PC-9 (cell line): ENCODE measurements at regions of chr5 and their contacts with region 1.

Region 1: DNA sequence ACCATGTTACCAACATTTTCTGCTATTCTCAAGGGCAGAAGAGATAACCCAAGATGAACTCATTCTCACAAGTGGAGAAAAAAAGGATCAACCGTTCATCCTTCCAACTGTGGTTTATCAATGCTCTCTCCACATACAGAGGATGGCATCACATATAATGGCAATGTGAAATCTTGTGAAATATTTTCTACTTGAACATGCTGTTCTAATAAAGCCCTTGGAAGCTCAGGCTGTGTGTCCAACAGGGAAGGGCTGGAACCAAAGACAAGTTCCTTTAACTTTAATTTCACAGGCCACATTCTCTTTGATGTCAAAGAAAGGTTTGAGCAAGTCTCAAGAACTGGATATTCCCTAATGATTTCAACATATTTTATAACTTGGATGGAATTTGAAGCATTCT is 230.5 kb downstream of the SPOCK1 start:
- DNase-seq: no peak
- H3K4me3 ChIP-seq: no peak overlapping the region
- H3K27ac ChIP-seq: no peak overlapping the region
- H3K4me1 ChIP-seq: no peaks in the 10 kb centered on the region
- H3K27me3 ChIP-seq: no peaks in the 10 kb centered on the region
- CTCF ChIP-seq: no peak

Region 2: GRCh38 chr5:136754216-136754615 is 514.4 kb before region 1 on chr5:
- CTCF ChIA-PET with region 1: no interaction called
- POLR2A ChIA-PET with region 1: no interaction called
- intact Hi-C with region 1: no loop called
- DNase-seq: no peak
- H3K4me3 ChIP-seq: no peak overlapping the region
- H3K27ac ChIP-seq: no peak overlapping the region
- H3K4me1 ChIP-seq: no peaks in the 10 kb centered on the region; the same call in 1 of the 2 replicates
- H3K27me3 ChIP-seq: no peaks in the 10 kb centered on the region
- CTCF ChIP-seq: no peak

Region 3: GRCh38 chr5:137292461-137293027 is 23.9 kb after region 1 on chr5:
- CTCF ChIA-PET with region 1: no interaction called
- POLR2A ChIA-PET with region 1: interaction called, 12 read pairs
- intact Hi-C with region 1: no loop called
- DNase-seq: no peak
- H3K4me3 ChIP-seq: no peak overlapping the region
- H3K27ac ChIP-seq: no peak overlapping the region
- H3K4me1 ChIP-seq: no peaks in the 10 kb centered on the region
- H3K27me3 ChIP-seq: no peaks in the 10 kb centered on the region
- CTCF ChIP-seq: no peak